T-cell (primary cell): ENCODE measurements at regions of chr15 and their contacts with region 1.

Region 1: GRCh38 chr15:97875513-97876280 is 84.8 kb upstream of the ARRDC4 start:
- DNase-seq: peak in 1 of 35 experiments; percentile 10
- ATAC-seq: no peak
- H3K4me3 ChIP-seq: no peak overlapping the region
- H3K4me3 Mint-ChIP-seq: no peak overlapping the region
- H3K27ac ChIP-seq: no peak overlapping the region
- H3K27ac Mint-ChIP-seq: no peak overlapping the region
- H3K4me1 ChIP-seq: no peaks in the 10 kb centered on the region
- H3K4me1 Mint-ChIP-seq: peaks cover 0 to 6% (median 0%) of the 10 kb centered on the region in 3 donors
- H3K27me3 ChIP-seq: peaks cover 0 to 5% of the 10 kb centered on the region in 2 experiments
- H3K27me3 Mint-ChIP-seq: peaks cover 0 to 12% of the 10 kb centered on the region in 2 donors

Region 2: GRCh38 chr15:97728791-97729190 is 146.9 kb before region 1 on chr15:
- CTCF ChIA-PET with region 1: no interaction called
- POLR2A ChIA-PET with region 1: no interaction called
- DNase-seq: no peak
- ATAC-seq: no peak
- H3K4me3 ChIP-seq: no peak overlapping the region
- H3K4me3 Mint-ChIP-seq: no peak overlapping the region
- H3K27ac ChIP-seq: no peak overlapping the region
- H3K27ac Mint-ChIP-seq: no peak overlapping the region
- H3K4me1 ChIP-seq: no peaks in the 10 kb centered on the region
- H3K4me1 Mint-ChIP-seq: no peaks in the 10 kb centered on the region
- H3K27me3 ChIP-seq: no peaks in the 10 kb centered on the region
- H3K27me3 Mint-ChIP-seq: no peaks in the 10 kb centered on the region

Region 3: GRCh38 chr15:98077186-98077585 is 201.5 kb after region 1 on chr15:
- CTCF ChIA-PET with region 1: no interaction called
- POLR2A ChIA-PET with region 1: interaction called in 1 of 2 experiments, 12 read pairs
- DNase-seq: no peak
- ATAC-seq: no peak
- H3K4me3 ChIP-seq: no peak overlapping the region
- H3K4me3 Mint-ChIP-seq: no peak overlapping the region
- H3K27ac ChIP-seq: no peak overlapping the region
- H3K27ac Mint-ChIP-seq: no peak overlapping the region
- H3K4me1 ChIP-seq: no peaks in the 10 kb centered on the region
- H3K4me1 Mint-ChIP-seq: no peaks in the 10 kb centered on the region
- H3K27me3 ChIP-seq: no peaks in the 10 kb centered on the region
- H3K27me3 Mint-ChIP-seq: no peaks in the 10 kb centered on the region